HEK293T (cell line): ENCODE measurements at regions of chr16 and their contacts with region 1.

Region 1: GRCh38 chr16:70289229-70290098 is at the start of gene AARS1:
- DNase-seq: peak; percentile 96

Region 2: GRCh38 chr16:70345840-70346239 is 56.4 kb after region 1 on chr16:
- CTCF ChIA-PET with region 1: no interaction called
- POLR2A ChIA-PET with region 1: interaction called, 10 read pairs
- DNase-seq: no peak